ENCODE measurements at regions of chr3 and their contacts with region 1.

Region 1: GRCh38 chr3:109071350-109072142 is 46.4 kb downstream of the MORC1 start:
- DNase-seq: no peak
- H3K4me3 ChIP-seq: no peak overlapping the region
- H3K27ac ChIP-seq: no peak overlapping the region
- H3K4me1 ChIP-seq: no peaks in the 10 kb centered on the region
- H3K27me3 ChIP-seq: no peaks in the 10 kb centered on the region
- CTCF ChIP-seq: no peak

Region 2: DNA sequence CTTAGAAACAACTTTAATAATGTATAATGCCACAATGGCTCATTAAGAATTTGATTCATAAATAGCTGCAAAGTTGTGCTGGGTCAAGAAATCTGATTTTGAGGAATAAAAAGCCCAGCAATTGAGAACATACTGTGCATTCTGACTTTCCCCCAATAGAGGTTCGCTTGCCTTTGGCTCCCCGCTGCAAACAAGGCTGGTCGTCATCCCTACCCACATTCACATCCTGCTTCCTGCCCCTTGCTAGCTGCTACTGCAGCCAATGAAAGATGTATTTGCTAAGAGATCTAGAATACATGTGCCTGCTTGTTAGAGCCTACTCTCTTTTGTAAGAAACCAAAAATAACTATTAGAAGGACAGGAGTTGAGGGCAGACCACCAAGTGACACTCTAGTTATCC is 66.1 kb before region 1 on chr3:
- intact Hi-C with region 1: loop called (anchors 2 kb)
- DNase-seq: no peak
- H3K4me3 ChIP-seq: no peak overlapping the region
- H3K27ac ChIP-seq: no peak overlapping the region
- H3K4me1 ChIP-seq: no peaks in the 10 kb centered on the region
- H3K27me3 ChIP-seq: no peaks in the 10 kb centered on the region
- CTCF ChIP-seq: no peak